ENCODE measurements at regions of chrX and their contacts with region 1.

Region 1: DNA sequence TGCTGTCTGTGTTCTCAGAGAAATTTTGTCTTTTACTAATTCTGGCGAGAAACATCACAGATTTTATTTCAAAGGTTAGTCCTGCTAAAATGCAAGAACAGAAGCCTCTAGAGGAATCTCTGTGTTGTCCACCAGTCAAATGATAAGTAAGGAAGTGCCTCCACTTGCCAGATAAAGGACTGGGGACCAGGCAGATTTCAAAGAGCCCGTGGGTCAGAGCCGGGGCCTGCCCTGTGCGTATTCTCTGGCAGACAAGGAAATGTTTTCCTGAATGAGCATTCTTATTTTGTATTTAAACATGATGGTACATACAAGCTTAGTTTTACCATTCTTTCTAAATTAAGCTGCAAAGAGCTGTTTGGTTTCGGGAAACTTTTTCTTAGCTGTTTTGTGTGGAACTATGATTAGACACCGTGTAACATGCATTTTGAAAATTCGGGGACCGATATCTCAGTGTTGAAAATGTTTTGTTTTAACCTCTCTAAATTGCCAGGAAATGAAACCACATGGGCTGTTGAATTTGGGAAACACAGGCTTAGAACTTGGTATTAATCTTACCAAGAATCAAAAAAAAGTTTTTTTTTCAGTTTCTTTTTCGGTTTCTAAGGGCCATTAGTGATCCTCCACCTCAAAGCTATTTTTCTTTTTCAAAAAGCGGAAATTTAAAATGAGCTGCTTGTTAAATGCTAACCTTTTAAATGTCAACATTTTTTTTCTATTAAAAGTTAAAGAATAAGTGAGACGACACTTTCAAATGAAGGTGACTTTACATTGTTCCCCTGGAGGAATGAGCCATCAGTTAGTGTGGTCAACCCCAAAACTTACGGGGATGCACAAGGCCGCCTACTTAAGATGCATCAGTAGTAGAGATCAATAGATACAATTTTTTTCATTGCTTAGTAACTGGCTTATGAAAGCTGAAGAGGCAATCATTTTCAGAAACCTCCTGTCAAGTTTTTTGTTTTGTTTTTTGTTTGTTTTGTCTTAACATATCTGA is 89.6 kb upstream of the MTM1 start:
- DNase-seq: peak; percentile 21
- H3K4me3 Mint-ChIP-seq: peak overlapping the region; percentile 66
- H3K27ac Mint-ChIP-seq: peak overlapping the region; percentile 95
- H3K4me1 Mint-ChIP-seq: peaks cover 75% of the 10 kb centered on the region
- H3K27me3 Mint-ChIP-seq: no peaks in the 10 kb centered on the region

Region 2: DNA sequence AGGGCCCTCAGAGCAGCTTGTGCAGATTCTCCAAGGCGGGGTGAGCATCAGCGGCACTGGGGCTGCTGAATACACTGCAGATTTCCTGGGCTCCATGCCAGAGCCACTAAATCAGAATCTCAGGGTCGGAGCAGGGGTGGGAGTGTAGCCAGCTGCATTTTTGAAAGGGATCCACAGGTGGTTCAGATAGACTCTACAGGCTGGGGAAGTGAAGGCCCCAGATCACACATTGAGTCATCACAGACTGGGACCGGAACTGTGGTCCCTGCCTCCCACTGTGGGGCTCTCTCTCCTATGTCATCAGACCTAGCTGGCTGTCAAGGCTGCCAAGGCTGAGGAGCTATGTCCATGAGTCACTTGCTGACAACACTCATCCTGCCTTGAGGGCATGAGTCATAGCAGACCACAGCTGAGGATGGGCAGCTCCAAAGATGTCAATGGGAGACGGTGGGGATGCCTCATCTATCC is 277.9 kb before region 1 on chrX:
- intact Hi-C with region 1: no loop called
- DNase-seq: peak; percentile 40
- H3K4me3 Mint-ChIP-seq: peak overlapping the region; percentile 26
- H3K27ac Mint-ChIP-seq: no peak overlapping the region
- H3K4me1 Mint-ChIP-seq: peaks cover 10% of the 10 kb centered on the region
- H3K27me3 Mint-ChIP-seq: peaks cover 2% of the 10 kb centered on the region

Region 3: GRCh38 chrX:150456471-150456870 is 22.3 kb before region 1 on chrX:
- intact Hi-C with region 1: loop called (anchors 2 kb)
- DNase-seq: no peak
- H3K4me3 Mint-ChIP-seq: no peak overlapping the region
- H3K27ac Mint-ChIP-seq: peak overlapping the region; percentile 42
- H3K4me1 Mint-ChIP-seq: peaks cover 70% of the 10 kb centered on the region
- H3K27me3 Mint-ChIP-seq: no peaks in the 10 kb centered on the region

Region 4: GRCh38 chrX:150547375-150548115 is 68.8 kb after region 1 on chrX:
- intact Hi-C with region 1: no loop called
- DNase-seq: no peak
- H3K4me3 Mint-ChIP-seq: peak overlapping the region; percentile 30
- H3K27ac Mint-ChIP-seq: peak overlapping the region; percentile 80
- H3K4me1 Mint-ChIP-seq: peaks cover 26% of the 10 kb centered on the region
- H3K27me3 Mint-ChIP-seq: no peaks in the 10 kb centered on the region

Region 5: DNA sequence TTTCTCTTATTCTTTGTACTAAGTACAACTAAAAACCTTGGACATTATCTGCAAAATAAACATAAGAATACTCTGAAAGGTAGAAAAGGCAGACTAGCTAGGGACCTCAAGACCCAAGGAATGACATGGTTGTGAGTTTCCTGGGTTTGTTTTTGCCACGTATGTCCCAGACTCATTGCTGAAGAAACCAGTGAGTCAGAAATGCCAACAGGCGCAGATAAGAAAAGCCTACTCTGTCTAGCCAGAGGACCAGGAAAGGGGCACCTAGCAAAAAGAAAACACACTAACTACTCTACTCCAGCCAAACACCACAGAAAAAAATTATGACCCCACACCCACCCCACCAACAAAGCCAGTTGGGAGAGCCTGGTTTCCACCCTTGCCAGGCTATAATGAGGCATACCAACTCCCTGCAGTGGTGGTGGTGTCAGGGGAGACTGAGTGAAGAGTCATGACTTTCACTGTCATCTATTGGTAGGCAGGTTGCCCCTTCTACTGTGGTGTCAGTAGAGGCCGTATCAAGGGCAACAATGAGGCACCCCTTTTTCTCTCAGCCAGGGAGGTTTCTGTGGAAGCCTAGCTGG is 225.3 kb after region 1 on chrX:
- intact Hi-C with region 1: loop called (anchors 2 kb)
- DNase-seq: no peak
- H3K4me3 Mint-ChIP-seq: no peak overlapping the region
- H3K27ac Mint-ChIP-seq: peak overlapping the region; percentile 68
- H3K4me1 Mint-ChIP-seq: peaks cover 28% of the 10 kb centered on the region
- H3K27me3 Mint-ChIP-seq: no peaks in the 10 kb centered on the region

Measured in activated T-helper 1 cell treated with anti-CD3 and anti-CD28 coated beads, Interleukin-12 subunit alpha, Interleukin-12 subunit beta, Interleukin-2, Interleukin-4 antibody, amounts not matched to agents 30 ng/mL and 10 ng/mL and 1 ng/mL, durations not matched to agents 14 hours and 24 hours and 36 hours (primary cell).